Transverse colon (tissue), 4 donors: ENCODE measurements at regions of chr2 and their contacts with region 1.

Region 1: GRCh38 chr2:148244587-148245292 is 223.8 kb downstream of the MBD5 start:
- DNase-seq: no peak
- H3K4me3 ChIP-seq: no peak overlapping the region
- H3K27ac ChIP-seq: no peak overlapping the region
- H3K4me1 ChIP-seq: no peaks in the 10 kb centered on the region
- H3K27me3 ChIP-seq: no peaks in the 10 kb centered on the region
- CTCF ChIP-seq: no peak
- EP300 ChIP-seq: no peak
- POLR2A ChIP-seq: no peak

Region 2: GRCh38 chr2:148231858-148232257 is 12.9 kb before region 1 on chr2:
- in situ Hi-C with region 1: no loop called
- intact Hi-C with region 1: loop called (anchors 2 kb)
- DNase-seq: no peak
- H3K4me3 ChIP-seq: no peak overlapping the region
- H3K27ac ChIP-seq: no peak overlapping the region
- H3K4me1 ChIP-seq: no peaks in the 10 kb centered on the region
- H3K27me3 ChIP-seq: no peaks in the 10 kb centered on the region
- CTCF ChIP-seq: no peak
- EP300 ChIP-seq: no peak
- POLR2A ChIP-seq: no peak